ENCODE measurements at regions of chr7 and their contacts with region 1.

Region 1: GRCh38 chr7:135843214-135843613 is 94.6 kb upstream of the FAM180A start:
- DNase-seq: no peak
- H3K4me3 ChIP-seq: no peak overlapping the region
- H3K27ac ChIP-seq: no peak overlapping the region
- H3K27me3 ChIP-seq: no peaks in the 10 kb centered on the region
- CTCF ChIP-seq: no peak

Region 2: GRCh38 chr7:135645296-135645904 is 197.8 kb before region 1 on chr7:
- in situ Hi-C with region 1: no loop called
- DNase-seq: peak; percentile 64
- H3K4me3 ChIP-seq: no peak overlapping the region
- H3K27ac ChIP-seq: no peak overlapping the region
- H3K27me3 ChIP-seq: no peaks in the 10 kb centered on the region
- CTCF ChIP-seq: peak; percentile 65

Region 3: GRCh38 chr7:136009488-136010079 is 166.4 kb after region 1 on chr7:
- in situ Hi-C with region 1: loop called (anchors 25 kb)
- DNase-seq: peak; percentile 8
- H3K4me3 ChIP-seq: no peak overlapping the region
- H3K27ac ChIP-seq: no peak overlapping the region
- H3K27me3 ChIP-seq: no peaks in the 10 kb centered on the region
- CTCF ChIP-seq: peak; percentile 31